ENCODE measurements at regions of chr3 and their contacts with region 1.

Region 1: DNA sequence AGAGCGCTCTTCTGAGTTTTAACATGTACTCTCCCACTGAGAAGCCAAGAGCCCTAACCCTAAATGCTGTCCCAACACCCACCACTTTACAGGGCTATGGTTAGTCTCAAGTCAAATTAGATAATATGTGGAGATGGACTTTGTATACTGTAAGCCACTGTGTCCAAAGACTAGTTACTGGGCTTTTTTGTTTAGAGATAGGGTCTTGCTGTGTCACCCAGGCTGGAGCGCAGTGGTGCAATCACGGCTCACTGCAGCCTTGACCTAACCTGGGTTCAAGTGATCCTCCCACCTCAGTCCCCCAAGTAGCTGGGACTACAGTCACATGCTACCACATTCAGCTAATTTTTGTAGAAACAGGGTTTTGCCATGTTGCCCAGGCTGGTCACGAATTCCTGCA is 23.2 kb downstream of the ZNF445 start:
- DNase-seq: no peak
- H3K4me3 ChIP-seq: no peak overlapping the region
- H3K27ac ChIP-seq: no peak overlapping the region
- H3K4me1 ChIP-seq: no peaks in the 10 kb centered on the region
- H3K27me3 ChIP-seq: no peaks in the 10 kb centered on the region
- CTCF ChIP-seq: no peak

Region 2: DNA sequence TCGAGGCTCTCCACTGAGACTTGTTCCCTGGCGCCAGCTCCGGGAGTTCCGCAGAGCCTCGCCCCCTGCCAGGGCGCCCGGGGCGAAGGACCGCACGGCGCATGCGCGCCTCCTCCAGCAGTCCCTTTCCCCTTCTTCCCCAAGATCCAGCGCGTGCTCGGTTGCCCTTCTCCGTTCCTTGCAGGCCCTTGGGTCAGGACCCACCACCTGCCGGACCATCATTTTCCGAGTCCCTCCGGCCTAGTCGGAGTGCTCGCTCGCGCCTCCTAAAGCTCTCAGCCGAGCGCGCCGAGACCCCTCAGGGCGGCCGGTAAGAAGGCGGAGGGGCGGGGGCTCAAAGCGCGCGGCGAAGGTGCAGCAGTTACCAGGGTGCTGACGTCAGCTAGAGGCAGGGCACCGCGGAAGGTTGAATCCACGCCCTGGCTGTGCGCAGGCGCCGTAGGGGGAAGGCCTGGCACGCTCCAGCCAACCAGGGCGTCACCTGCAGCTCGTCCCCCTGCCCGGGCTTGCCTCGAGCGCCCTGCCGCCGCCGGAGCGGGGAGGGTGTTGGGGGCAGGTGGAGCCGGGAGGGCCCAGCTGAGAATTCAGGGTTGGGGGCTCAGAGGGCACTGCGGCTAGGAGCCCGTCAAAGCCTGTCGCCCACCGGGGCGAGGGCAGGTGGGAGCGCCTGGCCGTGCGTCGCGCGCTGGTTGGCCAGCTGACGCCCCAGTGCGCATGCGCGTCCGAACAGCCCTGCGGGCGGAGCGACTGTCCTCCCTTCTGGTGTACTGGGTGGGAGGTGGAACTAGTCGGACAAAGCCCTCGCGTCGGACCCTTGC is 116.0 kb before region 1 on chr3 and contains the start of gene TCAIM:
- CTCF ChIA-PET with region 1: no interaction called
- POLR2A ChIA-PET with region 1: no interaction called
- intact Hi-C with region 1: no loop called
- DNase-seq: peak; percentile 88 to 98
- H3K4me3 ChIP-seq: peak within 1 kb of the TSS; percentile 69
- H3K27ac ChIP-seq: peak within 1 kb of the TSS; percentile 63
- H3K4me1 ChIP-seq: peaks cover 19% of the 10 kb centered on the region
- H3K27me3 ChIP-seq: no peaks in the 10 kb centered on the region
- CTCF ChIP-seq: no peak
- total RNA-seq, gene TCAIM: 22.8 and 28.3 TPM in 2 replicates

Region 3: DNA sequence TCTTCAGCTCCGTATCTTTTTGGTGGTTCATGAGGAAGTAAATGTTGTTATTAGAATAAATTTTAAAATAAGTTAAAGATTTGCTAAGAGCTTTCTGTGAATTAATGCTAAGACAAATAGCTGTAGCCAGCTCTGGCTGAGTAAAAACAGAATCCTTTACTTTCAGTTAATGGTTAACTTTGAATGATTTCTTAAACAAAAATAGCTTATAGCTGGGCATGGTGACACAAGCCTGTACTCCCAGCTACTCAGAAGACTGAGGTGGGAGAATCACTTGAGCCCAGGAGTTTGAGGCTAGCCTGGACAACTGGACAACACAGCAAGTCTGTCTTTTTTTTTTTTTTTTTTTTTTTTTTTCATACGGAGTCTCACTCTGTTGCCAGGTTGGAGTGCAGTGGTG is 90.7 kb before region 1 on chr3:
- CTCF ChIA-PET with region 1: no interaction called
- POLR2A ChIA-PET with region 1: interaction called, 20 read pairs
- intact Hi-C with region 1: no loop called
- DNase-seq: no peak
- H3K4me3 ChIP-seq: no peak overlapping the region
- H3K27ac ChIP-seq: no peak overlapping the region
- H3K4me1 ChIP-seq: no peaks in the 10 kb centered on the region
- H3K27me3 ChIP-seq: no peaks in the 10 kb centered on the region
- CTCF ChIP-seq: no peak